ENCODE measurements at regions of chr5 and their contacts with region 1.

Region 1: GRCh38 chr5:109078448-109078847 is 330.8 kb downstream of the FER start:
- DNase-seq: no peak

Region 2: DNA sequence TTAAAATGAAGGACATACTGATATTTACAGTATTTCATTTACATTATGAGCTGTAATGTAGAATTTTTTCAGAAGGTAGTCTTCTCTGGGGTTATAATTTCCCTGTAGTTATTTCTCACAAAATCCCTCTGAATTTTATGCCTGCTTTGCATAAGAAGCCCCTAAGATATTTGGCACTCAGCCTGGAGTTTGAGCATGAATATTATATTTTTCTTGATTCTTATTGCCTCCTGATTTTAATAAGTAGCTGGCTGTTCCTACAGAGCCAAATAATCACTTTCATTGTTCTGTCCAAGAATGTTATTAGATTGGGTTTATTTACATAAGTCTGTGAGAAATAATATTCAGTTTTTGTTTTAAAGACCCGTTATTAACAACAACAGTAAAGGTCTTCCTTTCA is 135.7 kb before region 1 on chr5:
- intact Hi-C with region 1: no loop called
- DNase-seq: no peak

Region 3: GRCh38 chr5:109136906-109137305 is 58.5 kb after region 1 on chr5:
- intact Hi-C with region 1: loop called in 1 of 2 experiments (anchors 2 kb)
- DNase-seq: no peak

Region 4: DNA sequence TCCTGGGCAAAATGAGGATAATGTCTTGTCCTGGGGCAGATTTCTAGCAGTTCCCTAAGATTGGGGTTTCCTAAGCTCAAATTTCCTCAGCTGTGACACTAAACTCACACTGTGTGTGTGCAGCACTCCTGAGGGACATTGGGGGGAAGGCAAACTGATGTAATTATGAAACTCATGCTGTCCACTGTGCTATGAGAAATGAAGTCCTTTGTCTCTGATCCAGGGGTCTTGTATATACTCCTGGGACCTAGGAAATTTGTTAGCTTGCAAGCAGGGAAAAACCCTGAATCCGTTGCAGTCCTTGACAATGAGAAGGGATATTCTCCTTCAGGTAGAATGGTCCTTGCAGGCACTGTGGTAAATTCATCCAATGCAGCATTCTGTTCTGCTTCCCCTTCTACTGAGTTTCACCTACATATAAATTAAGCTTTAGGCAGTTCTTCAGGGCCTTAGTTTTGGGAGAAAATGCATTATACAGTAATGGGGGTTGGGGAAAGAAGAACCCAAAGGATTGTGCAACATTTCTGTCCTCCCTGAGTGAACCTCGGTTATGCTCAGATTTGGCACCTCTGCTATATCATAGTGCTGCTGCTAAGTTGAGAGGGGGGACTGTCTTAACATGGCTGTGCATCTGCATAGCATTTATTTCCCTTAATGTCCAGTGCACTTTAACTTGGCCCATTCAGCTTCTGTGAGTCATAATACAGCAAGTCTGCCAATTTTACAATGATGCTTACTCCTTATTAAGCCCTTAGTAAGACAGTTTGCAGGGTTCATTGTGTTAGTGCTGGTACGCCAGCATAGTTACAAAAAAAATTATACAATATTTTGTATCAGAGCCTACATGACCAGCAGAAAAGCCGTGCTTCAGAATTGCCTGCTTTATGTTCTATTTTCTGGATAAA is 251.1 kb after region 1 on chr5:
- intact Hi-C with region 1: no loop called
- DNase-seq: no peak